Right ventricle myocardium inferior (tissue), 1 donor: ENCODE measurements at regions of chr11 and their contacts with region 1.

Region 1: DNA sequence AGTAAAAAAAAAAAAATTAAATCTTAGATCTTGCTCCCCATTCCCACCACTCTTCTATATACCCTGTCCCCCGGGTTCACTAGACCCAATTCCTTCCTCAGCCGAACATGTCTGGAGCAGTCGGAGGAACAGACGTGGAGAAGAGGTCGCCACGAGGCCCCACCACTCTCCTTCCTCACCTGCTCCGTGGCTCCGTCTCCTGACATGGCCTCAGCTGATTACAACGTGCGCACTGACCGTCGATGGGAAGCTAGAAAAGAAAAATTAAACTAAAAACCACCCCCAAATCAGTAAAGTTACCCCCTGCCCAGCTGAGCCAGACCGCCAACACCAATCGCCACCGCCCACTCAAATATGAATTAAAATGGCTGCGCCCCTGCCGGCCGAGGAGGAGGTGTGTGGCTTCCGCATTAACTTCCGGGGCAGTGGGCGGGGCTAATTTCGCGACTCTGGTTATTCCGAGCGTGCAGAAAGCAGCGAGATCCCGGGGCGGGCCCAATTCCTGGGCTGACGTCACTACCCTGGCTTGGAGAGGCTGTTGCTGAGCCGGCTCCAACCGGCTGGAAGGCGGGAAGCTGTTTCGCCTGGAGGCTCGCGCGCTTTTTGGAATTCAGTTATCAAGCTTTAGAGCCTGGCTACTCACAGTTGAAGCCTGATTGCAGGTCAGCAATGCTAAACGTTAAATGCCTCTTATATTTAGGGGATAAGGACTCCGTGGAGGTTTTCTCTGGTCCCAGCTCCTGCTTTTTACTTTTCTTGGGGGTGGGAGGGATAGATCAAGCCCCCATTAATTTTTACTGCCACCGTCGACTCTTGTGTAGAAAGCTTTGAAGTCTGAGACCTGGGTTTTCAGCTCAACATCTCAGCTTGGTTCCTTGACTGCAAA is at the start of gene CSTF3:
- DNase-seq: peak; percentile 100
- ATAC-seq: peak; percentile 99
- total RNA-seq, gene CSTF3: 12.6 TPM

Region 2: DNA sequence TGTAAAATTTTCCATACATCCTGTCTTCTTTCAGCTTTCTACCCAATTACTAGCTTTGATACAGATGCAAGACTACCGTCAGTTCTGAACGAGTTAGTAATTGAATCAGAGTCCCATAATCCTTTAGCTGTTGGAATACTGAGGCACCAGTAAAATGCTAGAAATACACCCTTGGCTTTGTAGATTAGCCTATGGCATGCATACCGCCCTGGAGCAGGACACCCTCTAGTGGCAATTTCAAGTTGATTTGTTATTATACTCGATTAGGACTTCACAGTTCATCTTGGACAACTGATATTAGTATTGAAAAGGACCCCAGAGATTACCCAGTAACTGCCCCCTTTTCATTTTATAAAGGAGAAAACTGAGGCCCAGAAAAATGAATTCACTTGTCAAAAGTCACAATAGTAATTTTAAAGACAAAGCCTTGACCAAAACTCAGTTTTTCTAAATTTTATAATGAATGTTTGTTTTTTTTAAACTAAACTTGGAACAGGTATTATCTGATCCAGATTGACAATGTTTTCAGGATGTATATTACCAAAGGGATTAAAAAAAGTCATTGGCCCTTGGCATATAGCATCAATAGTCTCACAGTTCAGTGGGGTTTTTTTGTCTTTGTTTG is 168.5 kb after region 1 on chr11:
- intact Hi-C with region 1: loop called (anchors 1 kb)
- DNase-seq: no peak
- ATAC-seq: peak; percentile 51

Region 3: DNA sequence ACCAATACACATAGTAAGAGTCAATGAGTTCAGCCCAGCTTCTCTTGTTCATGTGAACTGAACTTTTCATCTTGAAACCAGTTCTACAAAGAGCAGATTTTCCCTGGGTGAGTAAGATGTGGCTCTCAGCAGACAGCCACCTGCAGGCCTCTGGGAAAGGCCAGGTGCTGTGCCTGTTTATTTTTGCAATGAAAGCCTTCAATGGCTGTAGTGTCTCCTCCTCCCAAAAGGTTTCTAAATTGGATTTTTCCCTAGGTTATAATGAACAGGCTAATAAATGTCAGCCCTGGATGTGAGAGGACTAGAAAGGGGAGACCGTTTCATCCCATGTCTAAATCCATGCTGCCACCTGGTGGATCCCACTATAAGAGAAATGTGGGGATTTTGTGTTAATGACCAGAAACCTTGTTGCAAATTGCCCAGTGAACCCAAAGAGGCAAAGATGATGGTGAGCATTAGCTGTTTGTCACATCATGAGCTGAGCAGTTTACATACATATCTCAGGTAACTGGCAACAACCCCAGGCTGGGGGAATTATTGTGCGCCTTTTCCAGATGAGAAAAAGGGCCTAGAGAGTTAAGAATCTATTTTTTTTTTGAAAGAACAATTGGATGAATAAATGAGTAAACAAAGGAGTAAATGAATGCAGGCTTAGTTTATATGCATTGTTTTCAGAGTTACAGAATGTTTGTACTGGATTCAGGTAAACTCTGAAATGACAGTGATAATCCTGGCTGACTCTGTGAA is 526.5 kb after region 1 on chr11:
- intact Hi-C with region 1: loop called (anchors 5 kb)
- DNase-seq: no peak
- ATAC-seq: no peak